ENCODE measurements at regions of chr10 and their contacts with region 1.

Region 1: GRCh38 chr10:75401569-75402485 is at the start of gene ZNF503:
- DNase-seq: peak; percentile 95
- H3K4me3 ChIP-seq: peak within 1 kb of the TSS; percentile 60
- H3K27ac ChIP-seq: peak within 1 kb of the TSS; percentile 90
- H3K4me1 ChIP-seq: peaks cover 5% of the 10 kb centered on the region
- H3K27me3 ChIP-seq: peaks cover 15% of the 10 kb centered on the region
- CTCF ChIP-seq: no peak
- total RNA-seq, gene ZNF503: 3.6 to 8.0 TPM

Region 2: GRCh38 chr10:75646916-75647315 is 245.1 kb after region 1 on chr10:
- intact Hi-C with region 1: loop called (anchors 5 kb)
- DNase-seq: no peak
- H3K4me3 ChIP-seq: no peak overlapping the region
- H3K27ac ChIP-seq: no peak overlapping the region
- H3K4me1 ChIP-seq: no peaks in the 10 kb centered on the region
- H3K27me3 ChIP-seq: no peaks in the 10 kb centered on the region
- CTCF ChIP-seq: no peak

Region 3: DNA sequence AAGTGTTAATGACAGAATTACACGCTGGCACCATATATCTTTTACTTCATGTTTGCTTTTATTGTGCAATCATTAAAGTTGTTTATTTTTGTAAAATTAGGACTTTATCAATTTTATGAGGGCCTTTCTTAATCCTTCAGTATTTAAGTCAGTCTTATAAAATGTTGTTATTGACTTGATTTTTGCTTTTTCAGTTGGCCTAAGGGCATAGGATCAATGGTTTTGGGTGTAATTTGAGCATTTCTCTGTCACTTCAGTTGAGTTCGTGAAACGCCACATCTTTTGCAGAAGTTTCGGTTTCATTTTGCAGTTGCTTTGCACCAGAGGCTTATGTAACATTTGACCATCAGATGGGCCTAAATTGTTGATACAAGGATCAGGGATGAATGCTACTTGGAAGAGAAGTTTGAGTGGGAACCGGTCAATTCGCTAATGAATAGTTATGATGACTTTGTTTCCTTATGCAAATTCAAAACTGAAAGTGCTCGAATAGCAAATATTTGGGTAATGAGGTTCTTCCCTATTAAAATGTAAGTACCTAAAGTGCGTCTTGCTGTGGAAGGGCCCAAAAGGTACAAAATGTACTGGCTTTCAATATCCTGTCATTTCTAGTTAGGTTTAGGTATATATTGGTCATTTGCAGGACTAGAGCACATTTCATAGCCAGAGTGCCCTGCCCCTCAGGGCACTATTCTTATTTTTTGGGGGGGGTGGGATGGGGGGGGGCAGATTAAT is 370.5 kb after region 1 on chr10:
- intact Hi-C with region 1: loop called (anchors 10 kb)
- DNase-seq: no peak
- H3K4me3 ChIP-seq: no peak overlapping the region
- H3K27ac ChIP-seq: peak overlapping the region; percentile 16
- H3K4me1 ChIP-seq: no peaks in the 10 kb centered on the region
- H3K27me3 ChIP-seq: no peaks in the 10 kb centered on the region
- CTCF ChIP-seq: no peak

Region 4: GRCh38 chr10:75910032-75910431 is 508.2 kb after region 1 on chr10:
- intact Hi-C with region 1: loop called (anchors 5 kb)
- DNase-seq: no peak
- H3K4me3 ChIP-seq: no peak overlapping the region
- H3K27ac ChIP-seq: no peak overlapping the region
- H3K4me1 ChIP-seq: no peaks in the 10 kb centered on the region
- H3K27me3 ChIP-seq: no peaks in the 10 kb centered on the region
- CTCF ChIP-seq: peak; percentile 21

Region 5: GRCh38 chr10:76036111-76036940 is 634.5 kb after region 1 on chr10:
- intact Hi-C with region 1: loop called (anchors 5 kb)
- DNase-seq: peak; percentile 84
- H3K4me3 ChIP-seq: no peak overlapping the region
- H3K27ac ChIP-seq: no peak overlapping the region
- H3K4me1 ChIP-seq: no peaks in the 10 kb centered on the region
- H3K27me3 ChIP-seq: no peaks in the 10 kb centered on the region
- CTCF ChIP-seq: peak; percentile 96

Region 6: GRCh38 chr10:76086761-76087639 is 685.2 kb after region 1 on chr10:
- intact Hi-C with region 1: loop called (anchors 5 kb)
- DNase-seq: peak; percentile 72
- H3K4me3 ChIP-seq: no peak overlapping the region
- H3K27ac ChIP-seq: no peak overlapping the region
- H3K4me1 ChIP-seq: peaks cover under 1% of the 10 kb centered on the region
- H3K27me3 ChIP-seq: no peaks in the 10 kb centered on the region
- CTCF ChIP-seq: peak; percentile 73

Region 7: DNA sequence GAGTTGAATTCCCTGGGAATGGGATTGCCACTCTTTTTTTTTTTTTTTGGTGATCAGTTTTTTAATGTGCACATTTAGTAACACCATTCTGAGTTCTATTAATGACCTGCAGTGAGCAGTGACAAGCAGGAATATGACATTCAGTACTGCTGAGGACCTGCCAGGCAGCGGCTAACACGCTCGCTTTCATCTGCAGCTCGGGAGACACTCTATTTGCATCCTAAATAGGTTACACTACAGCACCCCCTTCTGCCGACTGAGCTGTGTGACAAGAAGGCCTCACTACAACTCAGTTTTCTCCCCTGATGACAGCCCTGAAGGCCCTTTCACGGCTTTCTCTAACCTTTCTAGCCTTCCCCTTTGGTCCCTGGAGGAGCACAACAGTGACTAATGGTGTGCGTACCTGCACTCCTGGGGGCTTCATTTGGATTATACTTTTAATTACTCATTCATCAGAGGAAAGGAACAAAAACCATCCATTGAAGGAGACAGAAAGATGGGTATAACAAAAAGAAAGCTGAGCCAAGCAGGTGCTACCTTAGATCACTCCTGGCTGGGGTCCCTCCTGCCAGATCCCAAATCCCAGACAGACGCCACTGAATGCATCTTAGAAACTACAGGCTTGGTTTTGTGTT is 902.0 kb after region 1 on chr10:
- intact Hi-C with region 1: loop called (anchors 10 kb)
- DNase-seq: peak; percentile 64
- H3K4me3 ChIP-seq: no peak overlapping the region
- H3K27ac ChIP-seq: no peak overlapping the region
- H3K4me1 ChIP-seq: no peaks in the 10 kb centered on the region
- H3K27me3 ChIP-seq: no peaks in the 10 kb centered on the region
- CTCF ChIP-seq: peak; percentile 44